Lower leg skin (tissue), 4 donors: ENCODE measurements at regions of chr14 and their contacts with region 1.

Region 1: GRCh38 chr14:34668111-34668510 is 38.2 kb upstream of the SNX6 start:
- DNase-seq: peak in 1 of 2 donors; percentile 26
- H3K4me3 ChIP-seq: no peak overlapping the region
- CTCF ChIP-seq: no peak
- POLR2A ChIP-seq: no peak

Region 2: DNA sequence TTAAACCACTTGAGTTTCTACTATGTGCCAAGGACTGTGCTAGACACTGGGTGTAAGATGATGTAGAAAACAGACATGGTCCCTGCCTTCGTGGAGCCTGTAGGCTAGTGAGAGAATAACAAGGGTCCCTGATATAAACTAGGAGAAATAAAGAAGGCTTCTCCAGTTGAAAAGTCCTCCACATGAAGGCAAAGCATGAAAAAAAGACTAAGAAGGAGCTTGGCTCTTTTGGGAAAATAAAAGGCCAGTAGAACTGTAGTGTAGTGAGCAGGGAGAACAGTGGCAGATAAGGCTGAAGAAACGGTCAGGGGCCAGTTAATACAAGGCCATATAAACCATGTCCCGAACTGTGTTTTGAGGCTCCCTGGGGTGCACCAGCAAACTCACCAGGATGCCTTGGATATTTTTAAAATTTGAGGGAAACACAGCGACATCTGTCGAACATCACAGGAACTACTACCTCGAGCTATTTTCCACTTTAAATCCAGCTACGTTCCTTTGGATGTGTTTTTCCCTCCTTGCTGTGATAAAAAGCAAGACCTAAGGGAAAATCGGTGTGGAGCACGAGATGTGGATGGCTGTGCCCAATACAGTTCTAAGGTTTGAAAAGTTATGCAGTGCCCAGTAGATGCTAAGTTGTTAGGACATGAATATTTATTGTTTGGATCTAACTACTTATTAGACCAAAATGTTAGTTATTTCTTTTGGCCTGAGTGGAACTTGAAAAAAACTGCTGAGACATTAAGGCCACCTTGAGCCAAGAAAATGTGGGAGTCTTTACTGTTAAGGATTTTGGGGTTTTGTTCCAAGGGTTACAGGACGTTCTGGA is 54.8 kb after region 1 on chr14:
- intact Hi-C with region 1: loop called (anchors 2 kb)
- DNase-seq: peak in 1 of 2 donors; percentile 47
- H3K4me3 ChIP-seq: no peak overlapping the region
- CTCF ChIP-seq: peak in 1 of 3 donors; percentile 65
- POLR2A ChIP-seq: no peak